ENCODE measurements at regions of chr18 and their contacts with region 1.

Region 1: DNA sequence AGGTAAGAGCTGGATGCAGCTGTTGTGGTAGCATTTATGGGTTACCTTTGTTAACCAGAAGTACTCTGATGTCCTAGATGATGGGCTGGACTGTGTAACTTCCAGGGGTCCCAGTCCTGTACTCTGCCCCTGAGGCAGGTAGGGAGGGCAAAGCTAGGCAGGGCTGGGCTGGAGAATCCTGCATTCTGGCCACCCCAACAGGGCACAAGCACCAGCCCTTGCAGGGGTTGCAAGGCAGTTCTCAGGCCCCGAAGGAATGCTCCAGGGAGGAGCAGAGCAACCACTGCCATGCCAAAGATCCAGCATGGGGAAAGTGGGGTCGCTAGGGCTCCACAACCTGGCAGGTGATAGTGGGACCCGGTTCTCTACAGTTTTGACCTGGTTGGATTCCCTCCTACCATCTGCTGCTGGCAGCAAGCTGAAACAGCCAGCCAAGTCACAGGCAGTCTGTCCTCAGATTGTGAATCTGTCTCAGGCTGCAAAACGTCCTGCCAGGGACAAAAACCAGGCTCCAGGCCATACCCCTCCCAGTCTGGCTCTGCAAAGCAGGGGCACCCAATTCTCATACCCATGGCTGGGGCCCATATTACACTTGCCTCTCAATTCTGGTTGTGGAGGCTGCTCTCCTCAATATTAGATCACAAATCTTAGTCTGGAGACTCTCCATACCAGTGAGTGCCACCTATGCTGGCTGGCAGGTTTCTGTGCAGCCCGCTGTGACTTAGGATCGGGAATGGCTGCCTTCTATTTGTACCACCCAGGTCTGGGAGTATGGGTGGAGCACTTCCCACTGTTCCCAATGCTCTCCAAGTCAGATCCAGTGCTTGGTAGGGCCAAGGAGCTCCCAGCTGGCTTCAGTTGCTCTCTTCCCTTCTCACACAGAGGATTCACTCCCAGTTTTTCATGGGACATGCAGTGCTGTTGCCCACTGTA is 61.1 kb downstream of the SMCHD1 start:
- DNase-seq: no peak
- ATAC-seq: peak; percentile 67 to 93

Region 2: DNA sequence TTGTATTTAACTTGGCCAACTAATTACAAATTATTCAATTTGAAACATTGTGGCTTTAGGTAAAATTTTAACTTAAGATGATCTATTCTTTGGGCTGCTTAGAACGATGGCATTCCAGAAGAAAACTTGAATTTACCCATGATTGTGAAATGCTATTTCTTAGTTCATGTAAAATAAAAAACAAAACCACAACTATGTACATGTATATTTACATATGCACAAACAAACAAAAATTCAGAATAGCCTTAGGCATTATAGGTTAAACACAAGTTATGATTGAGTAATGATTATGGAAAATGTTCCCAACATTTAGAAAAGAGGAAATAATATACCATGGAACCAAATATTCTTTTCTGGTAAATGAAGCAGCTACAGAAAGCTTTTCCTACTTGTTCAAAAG is 64.7 kb before region 1 on chr18:
- intact Hi-C with region 1: no loop called
- DNase-seq: no peak
- ATAC-seq: no peak

Region 3: GRCh38 chr18:2662990-2663389 is 53.7 kb before region 1 on chr18:
- intact Hi-C with region 1: loop called in 1 of 2 experiments (anchors 10 kb)
- DNase-seq: no peak
- ATAC-seq: no peak